PC-9 (cell line): ENCODE measurements at regions of chr6 and their contacts with region 1.

Region 1: GRCh38 chr6:41470331-41471063 is 75.7 kb upstream of the FOXP4 start:
- DNase-seq: peak in 1 of 2 experiments; percentile 53
- H3K4me3 ChIP-seq: no peak overlapping the region
- H3K27ac ChIP-seq: no peak overlapping the region
- H3K4me1 ChIP-seq: no peaks in the 10 kb centered on the region
- H3K27me3 ChIP-seq: peaks cover 28% of the 10 kb centered on the region; the same call in 1 of the 2 replicates
- CTCF ChIP-seq: no peak

Region 2: GRCh38 chr6:41488433-41489119 is 18.1 kb after region 1 on chr6:
- CTCF ChIA-PET with region 1: interaction called, 8 read pairs
- POLR2A ChIA-PET with region 1: interaction called, 10 read pairs
- intact Hi-C with region 1: no loop called
- DNase-seq: no peak
- H3K4me3 ChIP-seq: no peak overlapping the region
- H3K27ac ChIP-seq: no peak overlapping the region
- H3K4me1 ChIP-seq: no peaks in the 10 kb centered on the region
- H3K27me3 ChIP-seq: peaks cover 16% of the 10 kb centered on the region; the same call in 1 of the 2 replicates
- CTCF ChIP-seq: no peak

Region 3: DNA sequence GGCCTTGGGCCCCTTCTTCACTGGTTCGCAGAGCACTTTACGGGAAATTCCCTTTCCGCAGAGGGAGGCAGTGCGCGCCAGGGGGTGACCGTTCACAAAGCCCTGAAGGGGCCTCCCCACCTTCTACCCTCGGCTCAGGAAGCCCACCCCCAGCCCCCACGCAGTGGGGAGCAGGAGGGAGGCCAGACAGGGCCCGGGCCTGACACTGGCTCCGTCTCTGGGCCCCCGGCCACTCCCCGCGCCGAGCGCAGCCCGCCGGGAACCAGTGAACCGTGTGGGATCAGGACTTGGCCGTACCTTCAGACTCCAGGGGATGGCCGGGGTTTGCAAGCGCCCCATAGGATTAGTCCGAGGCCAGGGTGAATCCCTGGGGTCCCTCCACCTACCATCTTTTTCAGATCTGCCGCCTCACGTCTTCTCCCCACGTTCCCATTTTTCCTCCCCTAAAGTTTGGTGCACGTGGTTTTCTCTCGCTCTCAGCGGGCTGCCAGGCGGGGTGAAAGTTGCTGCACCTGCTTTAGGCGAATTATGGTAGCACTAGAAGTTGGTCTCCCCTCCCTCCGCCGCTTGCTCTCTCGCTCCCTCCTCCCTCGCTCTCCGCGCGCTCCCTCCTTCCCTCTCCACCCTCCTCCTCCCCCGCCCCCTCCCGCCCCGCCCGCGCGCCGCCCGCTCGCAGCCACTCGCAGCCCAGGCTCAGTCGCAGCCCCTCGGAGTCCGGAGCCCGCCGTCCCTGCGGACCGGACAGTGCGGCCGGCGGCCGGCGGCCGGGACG is 75.4 kb after region 1 on chr6 and contains the start of gene FOXP4:
- CTCF ChIA-PET with region 1: no interaction called
- POLR2A ChIA-PET with region 1: interaction called, 3 read pairs
- intact Hi-C with region 1: loop called (anchors 2 kb)
- DNase-seq: peak; percentile 74 to 84
- H3K4me3 ChIP-seq: peak within 1 kb of the TSS; percentile 80
- H3K27ac ChIP-seq: no peak within 1 kb of the TSS
- H3K4me1 ChIP-seq: no peaks in the 10 kb centered on the region
- H3K27me3 ChIP-seq: no peaks in the 10 kb centered on the region
- CTCF ChIP-seq: no peak
- total RNA-seq, gene FOXP4: 26.0 and 29.4 TPM in 2 replicates